ENCODE measurements at regions of chr9 and their contacts with region 1.

Region 1: DNA sequence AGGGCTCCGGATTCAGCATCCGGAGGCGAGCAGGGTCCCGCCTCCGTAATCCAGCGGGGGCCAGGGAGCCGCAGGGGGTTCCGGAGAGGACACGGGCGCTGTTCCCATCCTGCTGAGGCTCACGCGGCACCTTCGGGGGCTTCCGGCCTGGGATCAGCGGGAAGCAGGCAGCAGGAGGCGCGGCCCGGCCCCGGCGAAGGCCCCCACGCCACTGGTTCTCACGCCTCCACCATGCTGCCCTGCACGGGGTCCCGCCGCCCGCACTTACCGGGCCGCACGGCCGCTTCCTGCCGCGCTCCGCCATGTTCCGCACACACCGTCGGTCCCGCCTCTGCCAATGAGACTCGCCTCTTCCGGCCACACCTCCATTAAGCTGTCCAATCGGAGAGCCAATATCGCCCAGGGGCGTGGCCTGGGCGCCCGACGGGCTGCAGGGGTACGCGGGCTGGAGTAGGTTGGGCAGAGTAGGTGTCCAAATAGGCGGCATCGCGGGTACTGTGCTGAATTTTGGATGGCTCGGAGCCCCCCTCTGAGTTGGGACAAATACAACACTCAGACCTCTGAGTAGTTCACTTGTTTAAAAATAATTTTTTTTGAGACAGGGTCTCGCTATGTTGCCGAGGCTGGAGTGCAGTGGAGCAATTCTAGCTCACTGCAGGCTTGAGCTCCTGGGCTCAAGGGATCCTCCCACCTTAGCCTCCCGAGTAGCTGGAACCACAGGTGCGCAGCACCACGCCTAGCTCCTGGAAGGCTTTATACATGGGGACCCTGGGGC is at the start of gene SPOUT1:
- DNase-seq: peak; percentile 96
- ATAC-seq: peak; percentile 98
- H3K4me3 Mint-ChIP-seq: peak within 1 kb of the TSS; percentile 91
- H3K27ac Mint-ChIP-seq: peak within 1 kb of the TSS; percentile 88
- H3K4me1 Mint-ChIP-seq: peaks cover 23% of the 10 kb centered on the region
- H3K27me3 Mint-ChIP-seq: no peaks in the 10 kb centered on the region
- total RNA-seq, gene SPOUT1: 87.9 to 92.9 TPM

Region 2: GRCh38 chr9:128504485-128505413 is 324.9 kb before region 1 on chr9 and contains the start of gene GLE1:
- CTCF ChIA-PET with region 1: no interaction called
- POLR2A ChIA-PET with region 1: no interaction called
- intact Hi-C with region 1: loop called in 1 of 2 experiments (anchors 1 kb)
- DNase-seq: peak; percentile 98
- ATAC-seq: peak; percentile 99
- H3K4me3 Mint-ChIP-seq: peak within 1 kb of the TSS; percentile 95
- H3K27ac Mint-ChIP-seq: peak within 1 kb of the TSS; percentile 99
- H3K4me1 Mint-ChIP-seq: peaks cover 21% of the 10 kb centered on the region
- H3K27me3 Mint-ChIP-seq: no peaks in the 10 kb centered on the region
- total RNA-seq, gene GLE1: 52.5 to 54.4 TPM

Region 3: GRCh38 chr9:128688512-128689292 is 141.0 kb before region 1 on chr9 and contains the start of gene SET:
- CTCF ChIA-PET with region 1: no interaction called
- POLR2A ChIA-PET with region 1: interaction called, 3 read pairs
- intact Hi-C with region 1: loop called in 1 of 2 experiments (anchors 1 kb)
- DNase-seq: peak; percentile 96
- ATAC-seq: peak; percentile 71
- H3K4me3 Mint-ChIP-seq: peak within 1 kb of the TSS; percentile 99
- H3K27ac Mint-ChIP-seq: peak within 1 kb of the TSS; percentile 94
- H3K4me1 Mint-ChIP-seq: peaks cover 61% of the 10 kb centered on the region
- H3K27me3 Mint-ChIP-seq: no peaks in the 10 kb centered on the region
- total RNA-seq, gene SET: 673 to 682 TPM

Region 4: GRCh38 chr9:128742401-128742800 is 87.3 kb before region 1 on chr9:
- CTCF ChIA-PET with region 1: no interaction called
- POLR2A ChIA-PET with region 1: no interaction called
- intact Hi-C with region 1: no loop called
- DNase-seq: no peak
- ATAC-seq: no peak
- H3K4me3 Mint-ChIP-seq: no peak overlapping the region
- H3K27ac Mint-ChIP-seq: no peak overlapping the region
- H3K4me1 Mint-ChIP-seq: no peaks in the 10 kb centered on the region
- H3K27me3 Mint-ChIP-seq: no peaks in the 10 kb centered on the region

Region 5: DNA sequence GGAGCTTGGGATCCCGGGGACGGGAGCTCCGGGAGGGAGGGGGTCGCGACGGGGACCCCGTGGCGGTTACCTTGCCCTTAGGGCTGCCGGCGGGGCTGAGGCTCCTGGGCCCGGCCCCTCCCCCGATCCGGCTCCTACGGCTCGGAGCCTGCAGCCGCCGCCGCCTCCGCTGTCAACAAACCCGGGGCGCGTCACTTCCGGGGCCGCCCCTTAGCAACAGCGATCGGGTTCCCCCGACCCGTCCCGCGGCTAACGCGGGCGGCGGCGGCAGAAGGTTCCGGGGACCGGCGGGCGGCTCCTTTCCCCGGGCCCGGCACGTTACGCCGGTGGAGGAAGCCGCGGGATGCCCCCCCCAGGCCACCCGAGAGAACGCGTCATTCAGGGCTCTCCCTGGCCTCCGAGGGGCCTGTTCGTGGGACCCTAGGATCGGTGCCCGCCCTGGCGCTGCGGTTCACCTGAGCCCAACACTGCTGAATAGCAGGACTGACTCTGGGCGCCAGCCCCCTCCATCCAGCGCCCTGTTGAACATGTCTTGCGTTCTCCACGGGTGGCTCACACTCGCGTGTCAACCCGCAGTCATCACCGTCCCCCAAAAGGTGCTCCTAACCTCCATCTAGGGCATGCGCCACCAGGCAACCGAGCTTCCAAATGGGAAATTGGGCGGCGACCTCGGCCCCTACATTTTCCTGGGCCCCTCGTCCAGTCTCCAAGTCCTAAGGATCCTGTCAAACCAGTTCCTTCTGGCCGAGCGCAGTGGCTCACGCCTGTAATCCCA is 57.7 kb before region 1 on chr9 and contains the start of gene ZER1:
- CTCF ChIA-PET with region 1: interaction called, 3 read pairs
- POLR2A ChIA-PET with region 1: no interaction called
- intact Hi-C with region 1: loop called in 1 of 2 experiments (anchors 1 kb)
- DNase-seq: peak; percentile 97
- ATAC-seq: peak; percentile 94
- H3K4me3 Mint-ChIP-seq: peak within 1 kb of the TSS; percentile 82
- H3K27ac Mint-ChIP-seq: peak within 1 kb of the TSS; percentile 86
- H3K4me1 Mint-ChIP-seq: peaks cover 18% of the 10 kb centered on the region
- H3K27me3 Mint-ChIP-seq: no peaks in the 10 kb centered on the region
- total RNA-seq, gene ZER1: 17.1 to 19.3 TPM

Region 6: GRCh38 chr9:129028192-129028957 is 198.7 kb after region 1 on chr9 and contains the start of gene SH3GLB2:
- CTCF ChIA-PET with region 1: no interaction called
- POLR2A ChIA-PET with region 1: interaction called, 3 read pairs
- intact Hi-C with region 1: loop called in 1 of 2 experiments (anchors 1 kb)
- DNase-seq: peak; percentile 98
- ATAC-seq: peak; percentile 93
- H3K4me3 Mint-ChIP-seq: peak within 1 kb of the TSS; percentile 81
- H3K27ac Mint-ChIP-seq: peak within 1 kb of the TSS; percentile 52
- H3K4me1 Mint-ChIP-seq: peaks cover 17% of the 10 kb centered on the region
- H3K27me3 Mint-ChIP-seq: no peaks in the 10 kb centered on the region
- total RNA-seq, gene SH3GLB2: 49.1 to 53.7 TPM

Region 7: GRCh38 chr9:129036241-129036922 is 206.7 kb after region 1 on chr9 and contains the start of gene MIGA2:
- CTCF ChIA-PET with region 1: no interaction called
- POLR2A ChIA-PET with region 1: no interaction called
- intact Hi-C with region 1: loop called in 1 of 2 experiments (anchors 1 kb)
- DNase-seq: peak; percentile 96
- ATAC-seq: peak; percentile 99
- H3K4me3 Mint-ChIP-seq: peak within 1 kb of the TSS; percentile 98
- H3K27ac Mint-ChIP-seq: peak within 1 kb of the TSS; percentile 83
- H3K4me1 Mint-ChIP-seq: peaks cover 27% of the 10 kb centered on the region
- H3K27me3 Mint-ChIP-seq: no peaks in the 10 kb centered on the region
- total RNA-seq, gene MIGA2: 15.7 to 25.8 TPM

Region 8: DNA sequence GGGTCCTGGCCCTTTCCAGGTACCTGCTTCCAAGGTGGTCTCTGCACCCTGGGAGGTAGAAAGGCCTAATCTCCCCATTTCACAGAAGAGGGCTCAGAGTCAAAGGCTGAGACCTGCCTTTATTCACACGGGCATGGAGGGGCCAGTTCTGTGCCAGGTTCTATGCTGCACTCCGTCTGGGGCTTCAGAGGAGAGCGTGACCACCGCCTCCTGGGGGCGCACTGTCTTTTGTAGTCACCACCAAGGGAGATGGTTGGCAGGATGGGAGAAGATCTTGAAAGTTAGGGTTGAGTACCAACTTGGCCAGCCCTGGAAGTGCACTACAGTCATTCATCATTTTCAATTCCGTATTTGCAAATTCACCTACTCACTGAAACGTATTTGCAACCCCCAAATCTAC is 1811.0 kb after region 1 on chr9:
- CTCF ChIA-PET with region 1: no interaction called
- POLR2A ChIA-PET with region 1: no interaction called
- intact Hi-C with region 1: no loop called
- DNase-seq: peak; percentile 17
- ATAC-seq: no peak
- H3K4me3 Mint-ChIP-seq: no peak overlapping the region
- H3K27ac Mint-ChIP-seq: no peak overlapping the region
- H3K4me1 Mint-ChIP-seq: no peaks in the 10 kb centered on the region
- H3K27me3 Mint-ChIP-seq: no peaks in the 10 kb centered on the region

Measured in activated CD4-positive, alpha-beta T cell treated with anti-CD3 and anti-CD28 coated beads for 36 hours (primary cell).